Natural killer cell (primary cell): ENCODE measurements at regions of chr7 and their contacts with region 1.

Region 1: DNA sequence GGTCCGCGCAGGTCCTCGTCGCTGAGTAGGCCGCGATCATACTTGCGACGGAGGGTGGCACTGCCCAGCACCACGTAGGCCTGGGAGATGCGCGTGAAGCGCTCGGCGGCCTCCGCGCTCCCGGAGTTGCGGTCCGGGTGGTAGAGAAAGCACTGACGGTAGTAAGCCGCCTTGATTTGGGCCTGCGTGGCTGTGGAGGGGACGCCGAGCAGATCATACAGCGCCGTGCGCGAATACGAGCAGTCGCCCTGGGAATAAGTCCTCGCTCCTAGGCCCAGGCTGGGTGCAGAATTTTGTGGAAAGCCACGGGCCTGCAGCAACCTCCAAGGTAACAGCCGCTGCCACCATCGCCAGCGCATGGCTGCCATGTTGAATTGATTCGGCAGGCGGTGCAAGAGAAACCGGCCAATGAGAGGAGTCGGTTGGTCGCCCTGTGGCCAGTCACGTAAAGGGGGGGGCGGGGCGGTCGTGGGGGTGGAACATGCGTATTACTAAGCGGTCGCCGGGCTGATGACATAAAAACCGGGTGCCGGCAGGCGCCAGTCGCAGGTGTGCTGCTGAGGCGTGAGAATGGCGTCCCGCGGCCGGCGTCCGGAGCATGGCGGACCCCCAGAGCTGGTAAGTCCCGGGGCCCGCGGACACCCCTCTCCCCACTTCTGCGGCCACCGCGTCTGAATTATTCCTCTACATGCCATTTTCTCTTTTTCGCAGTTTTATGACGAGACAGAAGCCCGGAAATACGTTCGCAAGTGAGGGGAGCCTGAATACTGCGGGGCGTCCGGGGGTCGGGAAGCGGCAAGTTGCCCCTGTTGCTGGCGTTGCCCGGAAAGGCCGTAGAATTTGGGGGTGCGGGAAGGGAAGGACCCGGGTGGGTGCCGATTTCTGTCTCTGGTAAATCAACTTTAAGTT is at the starts of genes BUD23 and DNAJC30:
- DNase-seq: peak; percentile 86 to 96
- ATAC-seq: peak; percentile 96 to 98 (median 97)
- H3K4me3 ChIP-seq: peak within 1 kb of the TSS; percentile 98
- H3K4me3 Mint-ChIP-seq: peak within 1 kb of the TSS; percentile 99
- H3K27ac ChIP-seq: peak within 1 kb of the TSS; percentile 85
- H3K27ac Mint-ChIP-seq: peak within 1 kb of the TSS; percentile 94 to 97
- H3K4me1 ChIP-seq: peaks cover 23% of the 10 kb centered on the region
- H3K4me1 Mint-ChIP-seq: peaks cover 30% of the 10 kb centered on the region in 2 donors
- H3K27me3 ChIP-seq: no peaks in the 10 kb centered on the region
- H3K27me3 Mint-ChIP-seq: no peaks in the 10 kb centered on the region
- CTCF ChIP-seq: no peak
- total RNA-seq, gene BUD23: 93.1 to 101 (median 94.2) TPM
- total RNA-seq, gene DNAJC30: 8.7 to 9.9 (median 9.3) TPM

Region 2: GRCh38 chr7:73718905-73719805 is 35.8 kb after region 1 on chr7 and contains the start of gene STX1A:
- intact Hi-C with region 1: loop called (anchors 5 kb)
- DNase-seq: peak; percentile 63 to 89
- ATAC-seq: peak; percentile 72 to 86 (median 79)
- H3K4me3 ChIP-seq: peak within 1 kb of the TSS; percentile 65
- H3K4me3 Mint-ChIP-seq: peak within 1 kb of the TSS; percentile 94
- H3K27ac ChIP-seq: peak within 1 kb of the TSS; percentile 65
- H3K27ac Mint-ChIP-seq: peak within 1 kb of the TSS; percentile 26 to 92
- H3K4me1 ChIP-seq: peaks cover 42% of the 10 kb centered on the region
- H3K4me1 Mint-ChIP-seq: peaks cover 24 to 31% of the 10 kb centered on the region in 2 donors
- H3K27me3 ChIP-seq: no peaks in the 10 kb centered on the region
- H3K27me3 Mint-ChIP-seq: no peaks in the 10 kb centered on the region
- CTCF ChIP-seq: no peak
- total RNA-seq, gene STX1A: 13.2 to 20.4 (median 14.7) TPM

Region 3: DNA sequence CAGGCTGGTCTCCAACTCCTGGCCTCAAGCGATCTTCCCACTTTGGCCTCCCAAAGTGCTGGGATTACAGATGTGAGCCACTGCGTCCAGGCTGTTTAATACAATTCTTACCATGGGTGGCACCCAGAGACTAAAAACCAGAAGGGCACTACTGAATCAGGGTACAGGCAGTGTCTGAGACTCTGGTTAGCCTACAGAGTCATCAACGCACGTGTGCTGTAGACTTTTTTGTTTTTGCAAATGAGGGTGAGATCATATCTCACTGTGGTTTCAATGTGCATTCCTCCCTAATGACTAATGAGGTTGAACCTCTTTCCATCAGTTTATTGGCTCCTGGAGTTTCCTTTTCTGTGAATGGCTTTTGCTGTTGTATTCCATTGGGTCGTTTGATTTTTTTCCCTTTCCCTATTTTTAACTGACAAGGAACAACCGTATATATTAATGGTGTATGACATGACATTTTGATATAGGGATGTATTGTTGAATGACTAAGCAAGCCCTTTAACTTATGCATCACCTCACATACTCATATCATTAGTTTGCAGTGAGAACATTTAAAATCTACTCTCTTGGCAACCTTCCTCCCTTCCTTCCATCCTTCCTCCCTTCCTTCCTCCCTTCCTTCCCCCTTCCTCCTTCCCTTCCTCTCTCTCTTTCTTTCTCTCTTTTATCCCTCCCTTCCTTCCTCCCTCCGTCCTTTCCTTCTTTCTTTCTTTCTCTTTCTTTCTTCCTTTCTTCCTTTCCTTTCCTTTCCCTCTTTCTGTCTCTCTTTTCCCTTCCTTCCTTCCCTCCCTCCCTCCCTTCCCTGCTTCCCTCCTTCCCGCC is 168.3 kb after region 1 on chr7:
- intact Hi-C with region 1: no loop called
- DNase-seq: peak in 1 of 2 donors; percentile 40
- ATAC-seq: peak; percentile 52 to 75 (median 63)
- H3K4me3 ChIP-seq: no peak overlapping the region
- H3K4me3 Mint-ChIP-seq: no peak overlapping the region
- H3K27ac ChIP-seq: no peak overlapping the region
- H3K27ac Mint-ChIP-seq: no peak overlapping the region
- H3K4me1 ChIP-seq: peaks cover 8% of the 10 kb centered on the region
- H3K4me1 Mint-ChIP-seq: peaks cover 4 to 7% of the 10 kb centered on the region in 2 donors
- H3K27me3 ChIP-seq: no peaks in the 10 kb centered on the region
- H3K27me3 Mint-ChIP-seq: peaks cover 12 to 19% of the 10 kb centered on the region in 2 donors
- CTCF ChIP-seq: no peak

Region 4: DNA sequence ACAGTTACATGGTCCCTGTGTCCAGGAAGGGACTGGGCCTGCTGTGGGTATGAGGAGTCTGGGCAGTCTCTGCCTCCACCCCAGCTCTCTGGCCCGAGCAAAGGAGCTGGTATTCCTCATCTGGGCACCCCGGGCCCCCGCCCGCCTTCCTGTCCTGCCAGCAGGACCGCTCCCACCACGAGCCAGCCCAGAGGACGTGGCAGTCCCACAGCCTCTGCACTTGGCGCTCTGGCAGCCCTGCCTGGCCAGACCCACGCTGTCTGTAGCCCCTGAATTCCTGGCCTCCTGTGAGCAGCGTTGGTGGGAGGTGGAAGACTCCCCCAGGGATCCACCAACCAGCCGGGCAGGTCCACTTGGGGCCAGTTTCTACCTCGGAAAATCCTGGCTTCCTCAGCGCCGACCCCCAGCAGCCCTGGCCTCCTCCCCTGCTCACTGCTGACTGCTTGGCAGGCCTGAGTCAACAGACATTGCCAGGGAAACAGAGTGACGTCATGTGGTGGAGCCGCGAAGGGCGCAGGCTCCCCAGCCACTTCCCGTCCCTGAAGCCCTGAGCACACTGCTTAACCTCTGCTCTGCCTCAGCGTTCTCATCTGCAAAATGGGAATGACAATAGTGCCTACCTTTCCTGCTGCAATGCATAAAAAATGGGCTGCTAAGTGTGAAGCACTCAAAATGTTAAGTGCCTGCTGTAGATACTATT is 378.7 kb after region 1 on chr7:
- intact Hi-C with region 1: no loop called
- DNase-seq: peak; percentile 84 to 86
- ATAC-seq: peak; percentile 95 to 99 (median 95)
- H3K4me3 ChIP-seq: peak overlapping the region; percentile 21
- H3K4me3 Mint-ChIP-seq: peak overlapping the region; percentile 86
- H3K27ac ChIP-seq: peak overlapping the region; percentile 91
- H3K27ac Mint-ChIP-seq: peak overlapping the region; percentile 99 to 100
- H3K4me1 ChIP-seq: peaks cover 21% of the 10 kb centered on the region
- H3K4me1 Mint-ChIP-seq: peaks cover 8 to 18% of the 10 kb centered on the region in 2 donors
- H3K27me3 ChIP-seq: no peaks in the 10 kb centered on the region
- H3K27me3 Mint-ChIP-seq: peaks cover 0 to 3% of the 10 kb centered on the region in 2 donors
- CTCF ChIP-seq: no peak